Caco-2 (cell line): ENCODE measurements at regions of chr13 and their contacts with region 1.

Region 1: GRCh38 chr13:81106348-81106747 is 765.4 kb upstream of the SPRY2 start:
- DNase-seq: peak; percentile 75 to 92
- H3K4me3 ChIP-seq: no peak overlapping the region
- H3K4me3 Mint-ChIP-seq: peak overlapping the region; percentile 57
- H3K27ac Mint-ChIP-seq: peak overlapping the region; percentile 82
- H3K4me1 ChIP-seq: peaks cover 54% of the 10 kb centered on the region
- H3K4me1 Mint-ChIP-seq: peaks cover 26% of the 10 kb centered on the region
- H3K27me3 ChIP-seq: no peaks in the 10 kb centered on the region
- H3K27me3 Mint-ChIP-seq: no peaks in the 10 kb centered on the region
- CTCF ChIP-seq: no peak

Region 2: DNA sequence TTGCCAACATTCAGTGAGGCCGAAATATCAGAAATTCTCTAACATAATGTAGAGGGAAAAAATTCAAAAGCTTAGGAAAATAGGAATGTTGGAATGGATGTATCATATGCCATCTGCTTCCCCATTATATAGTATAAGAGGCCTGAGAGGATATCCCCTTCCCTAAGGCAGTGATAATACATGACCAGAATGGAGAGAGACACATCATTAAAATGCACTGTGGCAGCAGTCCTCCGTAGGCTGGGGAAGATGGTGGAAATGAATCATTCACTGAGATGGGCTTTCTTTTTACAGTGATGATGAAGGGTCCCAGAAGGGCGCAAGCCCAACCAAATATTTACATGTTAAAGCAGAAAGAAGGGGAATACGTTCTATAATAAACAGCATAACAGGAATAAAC is 33.6 kb after region 1 on chr13:
- CTCF ChIA-PET with region 1: no interaction called
- POLR2A ChIA-PET with region 1: interaction called, 3 read pairs
- intact Hi-C with region 1: loop called (anchors 1 kb)
- DNase-seq: no peak
- H3K4me3 ChIP-seq: no peak overlapping the region
- H3K4me3 Mint-ChIP-seq: peak overlapping the region; percentile 14
- H3K27ac Mint-ChIP-seq: peak overlapping the region; percentile 85
- H3K4me1 ChIP-seq: peaks cover 83% of the 10 kb centered on the region
- H3K4me1 Mint-ChIP-seq: peaks cover 55% of the 10 kb centered on the region
- H3K27me3 ChIP-seq: no peaks in the 10 kb centered on the region
- H3K27me3 Mint-ChIP-seq: no peaks in the 10 kb centered on the region
- CTCF ChIP-seq: no peak